ENCODE measurements at regions of chr2 and their contacts with region 1.

Region 1: DNA sequence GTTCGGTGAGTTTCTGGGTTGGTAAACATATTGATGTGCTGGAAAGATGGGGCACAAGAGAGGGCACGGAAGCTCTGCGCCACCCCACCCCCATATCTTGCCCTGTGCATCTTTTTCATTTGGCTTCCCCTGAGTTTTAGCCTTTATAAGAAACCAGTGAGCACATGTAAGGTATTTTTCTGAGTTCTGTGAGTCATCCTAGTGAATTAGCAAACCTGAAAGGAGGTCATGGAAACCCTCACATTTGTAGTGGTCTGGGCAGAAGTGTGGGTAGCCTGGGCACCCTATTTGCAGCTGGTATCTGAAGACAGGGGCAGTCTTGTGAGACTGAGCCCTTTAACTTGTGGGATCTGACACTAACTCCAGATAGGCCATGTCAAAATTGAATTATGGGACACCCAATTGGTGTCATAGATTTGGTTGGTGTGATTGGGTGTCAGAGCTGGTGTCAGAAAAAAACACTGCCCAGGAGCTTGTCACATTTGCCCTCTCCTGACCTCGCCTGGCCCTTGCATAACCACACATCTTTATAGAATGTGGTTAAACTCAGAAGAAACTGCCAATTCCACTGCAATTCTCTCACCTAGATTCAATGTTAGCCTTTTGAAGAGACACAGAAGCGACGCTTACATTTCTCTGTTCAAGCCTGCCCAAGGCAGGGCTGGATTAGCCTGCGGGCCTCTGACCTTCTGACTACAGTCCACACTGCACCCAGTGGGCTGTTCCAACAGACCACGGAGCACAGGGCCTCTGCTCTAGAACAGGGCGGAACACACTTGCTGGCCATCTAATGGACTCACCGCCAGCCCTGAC is 12.0 kb upstream of the GALM start:
- DNase-seq: peak; percentile 31 to 58 (median 32)
- ATAC-seq: peak; percentile 77
- H3K4me3 ChIP-seq: no peak overlapping the region
- H3K27ac ChIP-seq: peak overlapping the region; percentile 62
- H3K4me1 ChIP-seq: peaks cover 31 to 54% of the 10 kb centered on the region in 2 experiments
- H3K27me3 ChIP-seq: no peaks in the 10 kb centered on the region
- CTCF ChIP-seq: no peak
- EP300 ChIP-seq: no peak
- POLR2A ChIP-seq: no peak
- RAD21 ChIP-seq: no peak

Region 2: GRCh38 chr2:38615237-38615636 is 38.7 kb before region 1 on chr2:
- CTCF ChIA-PET with region 1: no interaction called
- POLR2A ChIA-PET with region 1: interaction called, 3 read pairs
- in situ Hi-C with region 1: no loop called
- intact Hi-C with region 1: loop called (anchors 1 kb)
- DNase-seq: peak in 3 of 4 experiments; percentile 20 to 40 (median 33)
- ATAC-seq: no peak
- H3K4me3 ChIP-seq: no peak overlapping the region
- H3K27ac ChIP-seq: peak overlapping the region; percentile 64; the same call in 1 of the 3 replicates
- H3K4me1 ChIP-seq: peaks cover 6 to 45% of the 10 kb centered on the region in 2 experiments
- H3K27me3 ChIP-seq: no peaks in the 10 kb centered on the region
- CTCF ChIP-seq: no peak
- EP300 ChIP-seq: peak; percentile 33; the same call in 1 of the 2 replicates
- POLR2A ChIP-seq: no peak
- RAD21 ChIP-seq: no peak

Region 3: GRCh38 chr2:38665854-38666555 is 12.1 kb after region 1 on chr2 and contains the start of gene GALM:
- CTCF ChIA-PET with region 1: no interaction called
- POLR2A ChIA-PET with region 1: interaction called, 18 read pairs
- in situ Hi-C with region 1: no loop called
- intact Hi-C with region 1: no loop called
- DNase-seq: peak; percentile 80 to 89 (median 82)
- ATAC-seq: peak; percentile 91
- H3K4me3 ChIP-seq: peak within 1 kb of the TSS; percentile 64
- H3K27ac ChIP-seq: peak within 1 kb of the TSS; percentile 74
- H3K4me1 ChIP-seq: peaks cover 7 to 16% of the 10 kb centered on the region in 2 experiments; a peak in 4 of 5 replicates
- H3K27me3 ChIP-seq: no peaks in the 10 kb centered on the region
- CTCF ChIP-seq: no peak
- EP300 ChIP-seq: peak; percentile 62
- POLR2A ChIP-seq: peak; percentile 65
- RAD21 ChIP-seq: no peak
- polyA plus RNA-seq, gene GALM: 38.0 to 51.7 TPM